ENCODE measurements at regions of chr12 and their contacts with region 1.

Region 1: GRCh38 chr12:53451661-53452158 is at the start of gene PCBP2:
- DNase-seq: peak; percentile 98 to 100 (median 99)

Region 2: DNA sequence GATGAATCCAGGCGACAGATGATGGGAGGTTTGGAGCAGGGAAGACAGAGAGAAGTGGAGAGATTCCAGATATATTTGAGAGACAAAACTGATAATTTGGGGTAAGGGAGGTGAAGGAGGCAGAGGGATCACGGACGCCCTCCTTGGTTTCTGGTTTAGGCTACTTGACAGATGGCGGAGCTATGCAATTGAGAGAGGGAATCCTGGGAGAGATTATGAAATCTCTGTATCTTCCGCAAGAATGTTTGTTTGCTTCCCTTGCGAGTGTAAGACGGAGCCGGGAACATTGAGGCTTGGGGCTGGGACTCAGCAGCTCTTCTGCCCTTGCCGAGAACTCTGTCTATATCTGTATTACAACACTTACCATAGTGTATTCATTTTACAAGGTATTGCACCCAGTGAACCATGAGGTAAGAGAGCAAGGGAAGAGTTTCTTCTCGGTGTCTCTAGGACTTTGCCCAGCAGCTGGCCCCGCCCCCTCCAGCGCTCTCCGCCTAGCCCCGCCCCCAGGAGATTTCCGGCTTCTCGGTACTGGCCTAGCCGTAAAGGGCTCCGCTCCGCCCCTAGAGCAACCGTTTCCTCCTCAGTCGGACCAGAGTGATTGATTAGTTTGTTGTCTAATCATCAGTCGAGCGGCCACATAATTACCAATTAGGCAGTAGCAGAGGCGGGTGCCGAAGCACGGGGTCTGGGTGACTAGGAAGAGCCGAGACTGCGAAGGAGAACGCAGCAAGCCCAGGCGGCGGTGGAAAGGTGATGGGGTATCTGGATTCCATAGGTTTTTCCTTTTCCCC is 10.5 kb before region 1 on chr12 and contains the start of gene PRR13:
- intact Hi-C with region 1: loop called (anchors 1 kb)
- DNase-seq: peak; percentile 92 to 100 (median 98)

Region 3: GRCh38 chr12:53492830-53493611 is 41.3 kb after region 1 on chr12:
- intact Hi-C with region 1: loop called (anchors 5 kb)
- DNase-seq: peak; percentile 93 to 99 (median 96)

Region 4: GRCh38 chr12:53543539-53543938 is 91.8 kb after region 1 on chr12:
- intact Hi-C with region 1: no loop called
- DNase-seq: peak; percentile 47 to 90 (median 75)

Region 5: GRCh38 chr12:54126696-54127537 is 675.2 kb after region 1 on chr12:
- intact Hi-C with region 1: no loop called
- DNase-seq: peak in 33 of 42 donors; percentile 8 to 63 (median 39)